ENCODE measurements at regions of chr1 and their contacts with region 1.

Region 1: DNA sequence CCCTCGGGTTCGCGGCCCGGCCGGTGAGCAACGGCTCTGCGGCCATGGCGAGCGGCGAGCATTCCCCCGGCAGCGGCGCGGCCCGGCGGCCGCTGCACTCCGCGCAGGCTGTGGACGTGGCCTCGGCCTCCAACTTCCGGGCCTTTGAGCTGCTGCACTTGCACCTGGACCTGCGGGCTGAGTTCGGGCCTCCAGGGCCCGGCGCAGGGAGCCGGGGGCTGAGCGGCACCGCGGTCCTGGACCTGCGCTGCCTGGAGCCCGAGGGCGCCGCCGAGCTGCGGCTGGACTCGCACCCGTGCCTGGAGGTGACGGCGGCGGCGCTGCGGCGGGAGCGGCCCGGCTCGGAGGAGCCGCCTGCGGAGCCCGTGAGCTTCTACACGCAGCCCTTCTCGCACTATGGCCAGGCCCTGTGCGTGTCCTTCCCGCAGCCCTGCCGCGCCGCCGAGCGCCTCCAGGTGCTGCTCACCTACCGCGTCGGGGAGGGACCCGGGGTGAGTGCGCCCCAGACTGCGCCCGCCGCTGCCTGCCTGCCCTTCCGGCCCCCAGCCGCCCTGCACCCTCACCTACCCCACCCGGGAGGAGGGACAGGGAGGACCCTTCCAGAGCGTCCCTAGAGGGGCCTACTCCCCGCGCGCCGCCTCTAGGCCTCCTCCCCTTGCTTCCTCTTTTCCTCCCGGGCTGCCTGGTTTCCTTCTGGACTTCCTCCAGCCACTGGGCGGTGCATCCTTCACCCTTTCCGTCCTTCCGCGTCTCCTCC is at the start of gene RNPEP:
- DNase-seq: peak; percentile 79
- ATAC-seq: peak; percentile 78
- H3K4me3 ChIP-seq: peak within 1 kb of the TSS; percentile 53 to 94 (median 67)
- H3K4me3 Mint-ChIP-seq: peak within 1 kb of the TSS; percentile 97
- H3K27ac ChIP-seq: peak within 1 kb of the TSS; percentile 6 to 54
- H3K27ac Mint-ChIP-seq: peak within 1 kb of the TSS; percentile 92
- H3K4me1 ChIP-seq: peaks cover 11 to 13% of the 10 kb centered on the region in 2 donors
- H3K4me1 Mint-ChIP-seq: peaks cover 27% of the 10 kb centered on the region
- H3K27me3 ChIP-seq: no peaks in the 10 kb centered on the region
- H3K27me3 Mint-ChIP-seq: no peaks in the 10 kb centered on the region
- CTCF ChIP-seq: no peak
- total RNA-seq, gene RNPEP: 42.9 and 43.1 TPM in 2 replicates

Region 2: GRCh38 chr1:201828820-201829774 is 153.7 kb before region 1 on chr1 and contains the start of gene IPO9:
- CTCF ChIA-PET with region 1: no interaction called
- POLR2A ChIA-PET with region 1: no interaction called
- intact Hi-C with region 1: loop called (anchors 1 kb)
- DNase-seq: peak; percentile 96
- ATAC-seq: peak; percentile 95
- H3K4me3 ChIP-seq: peak within 1 kb of the TSS; percentile 72 to 100 (median 96)
- H3K4me3 Mint-ChIP-seq: peak within 1 kb of the TSS; percentile 95
- H3K27ac ChIP-seq: peak within 1 kb of the TSS; percentile 84 to 95
- H3K27ac Mint-ChIP-seq: peak within 1 kb of the TSS; percentile 93
- H3K4me1 ChIP-seq: peaks cover 12 to 19% of the 10 kb centered on the region in 2 donors
- H3K4me1 Mint-ChIP-seq: peaks cover 43% of the 10 kb centered on the region
- H3K27me3 ChIP-seq: no peaks in the 10 kb centered on the region
- H3K27me3 Mint-ChIP-seq: no peaks in the 10 kb centered on the region
- CTCF ChIP-seq: peak; percentile 99
- total RNA-seq, gene IPO9: 56.9 and 57.0 TPM in 2 replicates

Region 3: DNA sequence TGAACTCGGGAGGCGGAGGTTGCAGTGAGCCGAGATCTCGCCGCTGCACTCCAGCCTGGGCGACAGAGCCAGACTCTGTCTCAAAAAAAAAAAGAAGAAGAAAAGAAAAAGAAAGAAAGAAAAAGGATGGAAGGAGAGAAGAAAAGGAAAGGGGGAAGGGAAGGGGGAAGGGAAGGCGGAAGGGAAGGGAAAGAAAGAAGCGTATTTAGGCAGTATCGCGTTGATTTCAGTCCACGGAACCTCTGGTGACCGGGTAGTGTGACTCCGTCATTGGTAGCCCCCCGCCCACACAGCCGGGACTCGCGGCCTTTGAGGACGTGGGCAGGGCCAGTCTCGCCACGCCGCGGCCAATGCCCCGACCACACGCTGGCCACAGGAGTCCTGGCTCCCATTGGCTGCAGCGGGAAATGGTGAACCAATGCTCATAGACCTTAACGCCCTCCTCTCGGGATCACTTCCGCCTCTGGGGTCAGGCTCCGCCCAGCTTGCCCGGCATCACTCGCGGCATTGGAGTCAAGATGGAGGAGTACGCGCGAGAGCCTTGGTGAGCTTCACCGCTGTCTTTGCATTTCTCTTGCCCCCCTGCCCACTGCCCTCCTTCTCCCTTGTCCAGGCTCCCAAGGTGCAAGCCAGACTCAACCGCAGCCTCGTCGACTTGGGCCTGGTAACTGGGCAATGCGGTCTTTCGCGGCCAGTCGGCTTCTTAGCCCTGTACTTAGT is 27.6 kb before region 1 on chr1 and contains the start of gene TIMM17A:
- CTCF ChIA-PET with region 1: no interaction called
- POLR2A ChIA-PET with region 1: interaction called, 7 read pairs
- intact Hi-C with region 1: loop called (anchors 1 kb)
- DNase-seq: peak; percentile 95
- ATAC-seq: peak; percentile 99
- H3K4me3 ChIP-seq: peak within 1 kb of the TSS; percentile 72 to 98 (median 75)
- H3K4me3 Mint-ChIP-seq: peak within 1 kb of the TSS; percentile 98
- H3K27ac ChIP-seq: peak within 1 kb of the TSS; percentile 73 to 89
- H3K27ac Mint-ChIP-seq: peak within 1 kb of the TSS; percentile 96
- H3K4me1 ChIP-seq: peaks cover 12 to 15% of the 10 kb centered on the region in 2 donors
- H3K4me1 Mint-ChIP-seq: peaks cover 26% of the 10 kb centered on the region
- H3K27me3 ChIP-seq: no peaks in the 10 kb centered on the region
- H3K27me3 Mint-ChIP-seq: no peaks in the 10 kb centered on the region
- CTCF ChIP-seq: no peak
- total RNA-seq, gene TIMM17A: 31.5 and 32.3 TPM in 2 replicates

Region 4: GRCh38 chr1:201999625-202000238 is 16.9 kb after region 1 on chr1:
- CTCF ChIA-PET with region 1: interaction called, 17 read pairs
- POLR2A ChIA-PET with region 1: no interaction called
- intact Hi-C with region 1: no loop called
- DNase-seq: peak; percentile 47
- ATAC-seq: peak; percentile 49
- H3K4me3 ChIP-seq: no peak overlapping the region
- H3K4me3 Mint-ChIP-seq: no peak overlapping the region
- H3K27ac ChIP-seq: no peak overlapping the region
- H3K27ac Mint-ChIP-seq: no peak overlapping the region
- H3K4me1 ChIP-seq: no peaks in the 10 kb centered on the region
- H3K4me1 Mint-ChIP-seq: no peaks in the 10 kb centered on the region
- H3K27me3 ChIP-seq: no peaks in the 10 kb centered on the region
- H3K27me3 Mint-ChIP-seq: no peaks in the 10 kb centered on the region
- CTCF ChIP-seq: peak; percentile 71

Region 5: GRCh38 chr1:202348509-202349205 is 365.9 kb after region 1 on chr1 and contains the start of gene PPP1R12B:
- CTCF ChIA-PET with region 1: no interaction called
- POLR2A ChIA-PET with region 1: no interaction called
- intact Hi-C with region 1: loop called (anchors 10 kb)
- DNase-seq: peak; percentile 97
- ATAC-seq: peak; percentile 94
- H3K4me3 ChIP-seq: peak within 1 kb of the TSS; percentile 74 to 97 (median 89)
- H3K4me3 Mint-ChIP-seq: peak within 1 kb of the TSS; percentile 91
- H3K27ac ChIP-seq: peak within 1 kb of the TSS; percentile 3 to 79
- H3K27ac Mint-ChIP-seq: peak within 1 kb of the TSS; percentile 90
- H3K4me1 ChIP-seq: peaks cover 11 to 12% of the 10 kb centered on the region in 2 donors
- H3K4me1 Mint-ChIP-seq: peaks cover 29% of the 10 kb centered on the region
- H3K27me3 ChIP-seq: no peaks in the 10 kb centered on the region
- H3K27me3 Mint-ChIP-seq: no peaks in the 10 kb centered on the region
- CTCF ChIP-seq: no peak
- total RNA-seq, gene PPP1R12B: 36.8 and 49.6 TPM in 2 replicates

Measured in B cell (primary cell).